ENCODE measurements at regions of chr4 and their contacts with region 1.

Region 1: GRCh38 chr4:181737744-181738143 is 505.5 kb upstream of the TENM3 start:
- DNase-seq: no peak
- H3K4me3 ChIP-seq: no peak overlapping the region
- H3K27ac ChIP-seq: no peak overlapping the region
- H3K4me1 ChIP-seq: no peaks in the 10 kb centered on the region
- H3K27me3 ChIP-seq: no peaks in the 10 kb centered on the region
- CTCF ChIP-seq: no peak
- POLR2A ChIP-seq: no peak

Region 2: DNA sequence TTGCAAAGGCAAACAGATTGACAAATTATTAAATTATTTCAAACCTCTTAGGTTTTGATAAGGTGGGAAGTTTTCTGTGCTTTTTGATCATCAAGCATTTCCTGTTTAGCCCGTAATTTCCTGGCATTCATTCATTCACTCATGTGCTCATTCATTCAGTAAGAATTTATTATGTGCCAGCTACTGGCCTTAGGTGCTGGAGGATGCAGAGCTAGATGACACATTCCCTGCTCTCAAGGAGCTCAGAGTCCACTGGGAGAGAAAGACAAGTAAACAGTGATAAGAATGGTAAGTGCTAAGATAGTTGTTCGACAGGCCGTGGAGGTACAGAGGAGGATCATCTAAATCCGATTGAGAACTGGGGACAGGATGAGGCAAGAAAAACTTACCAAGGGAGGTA is 1026.4 kb after region 1 on chr4:
- intact Hi-C with region 1: loop called (anchors 5 kb)
- DNase-seq: no peak
- H3K4me3 ChIP-seq: no peak overlapping the region
- H3K27ac ChIP-seq: no peak overlapping the region
- H3K4me1 ChIP-seq: no peaks in the 10 kb centered on the region
- H3K27me3 ChIP-seq: no peaks in the 10 kb centered on the region
- CTCF ChIP-seq: no peak
- POLR2A ChIP-seq: no peak

Measured in breast epithelium (tissue), 4 donors.